ENCODE measurements at regions of chr19 and their contacts with region 1.

Region 1: GRCh38 chr19:43101950-43102349 is 19.4 kb upstream of the PSG2 start:
- DNase-seq: no peak
- H3K4me3 Mint-ChIP-seq: no peak overlapping the region
- H3K27ac Mint-ChIP-seq: no peak overlapping the region
- H3K4me1 Mint-ChIP-seq: peaks cover 6% of the 10 kb centered on the region
- H3K27me3 Mint-ChIP-seq: no peaks in the 10 kb centered on the region
- CTCF ChIP-seq: no peak

Region 2: GRCh38 chr19:43078311-43078710 is 23.6 kb before region 1 on chr19:
- CTCF ChIA-PET with region 1: no interaction called
- POLR2A ChIA-PET with region 1: no interaction called
- intact Hi-C with region 1: no loop called
- DNase-seq: peak; percentile 13
- H3K4me3 Mint-ChIP-seq: no peak overlapping the region
- H3K27ac Mint-ChIP-seq: peak overlapping the region; percentile 80
- H3K4me1 Mint-ChIP-seq: peaks cover 10% of the 10 kb centered on the region
- H3K27me3 Mint-ChIP-seq: no peaks in the 10 kb centered on the region
- CTCF ChIP-seq: no peak

Region 3: GRCh38 chr19:43191191-43191590 is 89.2 kb after region 1 on chr19:
- CTCF ChIA-PET with region 1: interaction called, 31 read pairs
- POLR2A ChIA-PET with region 1: no interaction called
- intact Hi-C with region 1: loop called (anchors 1 kb)
- DNase-seq: no peak
- H3K4me3 Mint-ChIP-seq: no peak overlapping the region
- H3K27ac Mint-ChIP-seq: no peak overlapping the region
- H3K4me1 Mint-ChIP-seq: peaks cover 7% of the 10 kb centered on the region
- H3K27me3 Mint-ChIP-seq: no peaks in the 10 kb centered on the region
- CTCF ChIP-seq: no peak

Region 4: DNA sequence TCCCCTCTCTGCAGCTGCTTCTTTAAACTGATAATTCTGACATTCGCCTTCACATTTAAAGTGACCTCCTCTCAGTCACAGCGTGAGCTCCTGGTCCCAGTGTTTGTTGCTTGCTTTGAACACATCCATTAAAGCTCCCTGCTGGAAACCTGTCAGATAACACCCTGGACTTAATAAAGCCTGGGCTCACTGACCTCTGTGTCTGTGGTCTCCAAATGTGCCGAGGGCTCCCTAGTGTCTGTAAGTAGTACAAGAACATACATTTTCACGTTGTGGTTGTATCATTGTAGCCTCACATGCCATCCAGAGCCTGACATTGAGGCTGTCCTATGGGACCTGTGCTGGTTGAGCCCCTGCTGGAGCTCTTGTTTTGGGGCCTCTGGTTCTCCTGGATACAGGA is 106.0 kb after region 1 on chr19:
- CTCF ChIA-PET with region 1: interaction called, 39 read pairs
- POLR2A ChIA-PET with region 1: no interaction called
- intact Hi-C with region 1: loop called (anchors 1 kb)
- DNase-seq: no peak
- H3K4me3 Mint-ChIP-seq: no peak overlapping the region
- H3K27ac Mint-ChIP-seq: no peak overlapping the region
- H3K4me1 Mint-ChIP-seq: peaks cover 3% of the 10 kb centered on the region
- H3K27me3 Mint-ChIP-seq: no peaks in the 10 kb centered on the region
- CTCF ChIP-seq: no peak

Region 5: GRCh38 chr19:43265664-43266025 is 163.7 kb after region 1 on chr19:
- CTCF ChIA-PET with region 1: no interaction called
- POLR2A ChIA-PET with region 1: no interaction called
- intact Hi-C with region 1: loop called (anchors 5 kb)
- DNase-seq: no peak
- H3K4me3 Mint-ChIP-seq: peak overlapping the region; percentile 55
- H3K27ac Mint-ChIP-seq: peak overlapping the region; percentile 83
- H3K4me1 Mint-ChIP-seq: peaks cover 31% of the 10 kb centered on the region
- H3K27me3 Mint-ChIP-seq: no peaks in the 10 kb centered on the region
- CTCF ChIP-seq: no peak

Measured in MCF 10A (cell line).